Posterior vena cava (tissue), 2 donors: ENCODE measurements at regions of chr11 and their contacts with region 1.

Region 1: DNA sequence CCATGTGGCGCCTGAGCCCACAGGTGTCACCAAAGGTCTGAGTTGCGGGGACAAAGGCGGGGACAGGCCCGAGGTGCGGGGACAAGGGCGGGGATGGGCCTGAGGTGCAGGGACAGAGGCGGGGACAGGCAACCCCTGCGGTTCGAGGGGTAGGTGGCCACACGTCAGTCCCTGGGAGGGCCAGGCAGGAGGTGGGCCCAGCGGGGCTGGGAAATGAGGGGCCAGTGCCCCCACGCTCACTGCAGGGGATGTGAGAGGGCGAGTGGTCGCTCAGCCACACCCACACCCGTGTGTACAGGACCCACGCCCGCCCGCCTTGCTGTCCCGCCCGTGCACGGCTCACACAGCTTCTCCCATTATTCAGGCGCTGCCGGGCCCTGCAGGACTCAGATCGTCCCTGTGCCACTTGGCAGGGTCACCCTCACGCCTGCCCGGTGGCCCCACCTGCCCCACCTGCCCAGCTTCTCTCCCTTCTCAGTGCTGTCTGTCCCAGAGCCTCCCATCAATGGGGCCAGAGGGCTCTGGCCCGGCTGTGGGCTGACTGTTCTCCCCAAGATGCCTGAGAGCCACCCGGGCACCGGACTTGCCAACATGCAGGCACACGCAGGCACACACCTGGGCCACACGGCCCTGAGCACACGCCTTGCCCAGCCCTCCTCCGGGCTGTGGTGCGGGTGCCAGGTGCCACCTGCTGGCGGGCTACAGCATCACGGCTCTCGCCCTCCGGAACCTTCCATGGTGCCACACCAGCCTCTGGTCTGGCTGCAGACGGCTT is 14.2 kb upstream of the MUC6 start:
- DNase-seq: peak; percentile 86

Region 2: GRCh38 chr11:850775-851763 is 199.7 kb before region 1 on chr11:
- intact Hi-C with region 1: loop called in 1 of 2 experiments (anchors 5 kb)
- DNase-seq: no peak

Region 3: GRCh38 chr11:859509-860131 is 191.1 kb before region 1 on chr11:
- intact Hi-C with region 1: loop called (anchors 5 to 10 kb)
- DNase-seq: peak; percentile 94

Region 4: GRCh38 chr11:1230451-1231395 is 180.0 kb after region 1 on chr11:
- intact Hi-C with region 1: no loop called
- DNase-seq: peak; percentile 76